ENCODE measurements at regions of chr2 and their contacts with region 1.

Region 1: DNA sequence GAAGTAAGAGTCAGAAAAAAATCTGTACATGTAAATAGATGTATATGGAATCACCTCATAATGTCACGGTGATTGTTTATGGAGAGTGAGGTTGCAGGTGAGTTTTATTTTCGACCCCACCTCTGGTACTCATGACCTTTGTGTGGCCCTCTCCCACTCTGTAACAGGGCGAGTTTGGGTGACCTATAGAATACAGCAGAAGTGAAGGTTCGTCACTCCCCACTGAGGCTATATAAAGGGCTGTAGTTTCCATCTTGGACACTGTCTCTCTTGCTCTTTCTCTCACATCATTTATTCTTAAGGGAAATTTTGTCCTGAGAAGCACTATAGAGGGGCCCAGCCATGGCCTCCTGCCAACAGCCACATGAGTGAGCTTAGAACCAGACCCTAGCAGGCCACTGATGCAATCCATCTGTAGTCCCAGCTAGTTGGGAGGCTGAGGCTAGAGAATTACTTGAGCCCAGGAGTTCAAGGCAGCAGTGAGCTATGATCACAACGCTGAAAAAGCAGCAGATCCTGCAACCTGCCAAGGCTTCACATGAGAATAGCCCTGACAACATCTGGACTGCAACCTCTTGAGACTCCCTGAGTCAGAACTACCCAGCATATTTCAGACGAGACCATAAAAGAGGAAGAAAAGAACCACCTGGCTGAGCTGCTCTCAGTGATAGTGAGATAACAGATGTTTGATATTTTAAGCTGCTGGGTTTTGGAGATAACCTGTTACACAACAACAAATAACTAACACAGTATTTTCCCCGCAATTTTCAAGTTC is 74.3 kb upstream of the SLC1A4 start:
- DNase-seq: no peak
- ATAC-seq: no peak
- H3K4me3 Mint-ChIP-seq: no peak overlapping the region
- H3K27ac Mint-ChIP-seq: no peak overlapping the region
- H3K4me1 Mint-ChIP-seq: peaks cover 39% of the 10 kb centered on the region
- H3K27me3 Mint-ChIP-seq: peaks cover 15% of the 10 kb centered on the region
- CTCF ChIP-seq: no peak

Region 2: GRCh38 chr2:64819774-64820696 is 94.9 kb before region 1 on chr2:
- CTCF ChIA-PET with region 1: no interaction called
- POLR2A ChIA-PET with region 1: no interaction called
- DNase-seq: no peak
- ATAC-seq: no peak
- H3K4me3 Mint-ChIP-seq: no peak overlapping the region
- H3K27ac Mint-ChIP-seq: no peak overlapping the region
- H3K4me1 Mint-ChIP-seq: peaks cover 26% of the 10 kb centered on the region
- H3K27me3 Mint-ChIP-seq: peaks cover 4% of the 10 kb centered on the region
- CTCF ChIP-seq: no peak

Region 3: GRCh38 chr2:64859312-64860212 is 55.4 kb before region 1 on chr2:
- CTCF ChIA-PET with region 1: interaction called, 11 read pairs
- POLR2A ChIA-PET with region 1: no interaction called
- DNase-seq: peak; percentile 72
- ATAC-seq: peak; percentile 71
- H3K4me3 Mint-ChIP-seq: peak overlapping the region; percentile 72
- H3K27ac Mint-ChIP-seq: no peak overlapping the region
- H3K4me1 Mint-ChIP-seq: peaks cover 20% of the 10 kb centered on the region
- H3K27me3 Mint-ChIP-seq: peaks cover 27% of the 10 kb centered on the region
- CTCF ChIP-seq: no peak

Region 4: GRCh38 chr2:64937687-64938491 is 23.0 kb after region 1 on chr2:
- CTCF ChIA-PET with region 1: interaction called, 25 read pairs
- POLR2A ChIA-PET with region 1: no interaction called
- DNase-seq: no peak
- ATAC-seq: no peak; the same call in 1 of the 2 replicates
- H3K4me3 Mint-ChIP-seq: no peak overlapping the region
- H3K27ac Mint-ChIP-seq: no peak overlapping the region
- H3K4me1 Mint-ChIP-seq: peaks cover 21% of the 10 kb centered on the region
- H3K27me3 Mint-ChIP-seq: no peaks in the 10 kb centered on the region; the same call in 1 of the 2 replicates
- CTCF ChIP-seq: no peak

Region 5: GRCh38 chr2:65040400-65041261 is 125.7 kb after region 1 on chr2:
- CTCF ChIA-PET with region 1: interaction called, 19 read pairs
- POLR2A ChIA-PET with region 1: no interaction called
- DNase-seq: peak; percentile 84
- ATAC-seq: peak; percentile 88
- H3K4me3 Mint-ChIP-seq: no peak overlapping the region
- H3K27ac Mint-ChIP-seq: no peak overlapping the region
- H3K4me1 Mint-ChIP-seq: peaks cover 31% of the 10 kb centered on the region
- H3K27me3 Mint-ChIP-seq: no peaks in the 10 kb centered on the region
- CTCF ChIP-seq: peak; percentile 89

Region 6: GRCh38 chr2:65056215-65057053 is 141.5 kb after region 1 on chr2 and contains the start of gene CEP68:
- CTCF ChIA-PET with region 1: interaction called, 28 read pairs
- POLR2A ChIA-PET with region 1: interaction called, 4 read pairs
- DNase-seq: peak; percentile 97
- ATAC-seq: peak; percentile 96
- H3K4me3 Mint-ChIP-seq: peak within 1 kb of the TSS; percentile 94
- H3K27ac Mint-ChIP-seq: peak within 1 kb of the TSS; percentile 83
- H3K4me1 Mint-ChIP-seq: peaks cover 33% of the 10 kb centered on the region
- H3K27me3 Mint-ChIP-seq: no peaks in the 10 kb centered on the region; the same call in 1 of the 2 replicates
- CTCF ChIP-seq: no peak
- total RNA-seq, gene CEP68: 14.6 to 16.7 TPM (median 15.3 TPM) in 3 replicates

Region 7: DNA sequence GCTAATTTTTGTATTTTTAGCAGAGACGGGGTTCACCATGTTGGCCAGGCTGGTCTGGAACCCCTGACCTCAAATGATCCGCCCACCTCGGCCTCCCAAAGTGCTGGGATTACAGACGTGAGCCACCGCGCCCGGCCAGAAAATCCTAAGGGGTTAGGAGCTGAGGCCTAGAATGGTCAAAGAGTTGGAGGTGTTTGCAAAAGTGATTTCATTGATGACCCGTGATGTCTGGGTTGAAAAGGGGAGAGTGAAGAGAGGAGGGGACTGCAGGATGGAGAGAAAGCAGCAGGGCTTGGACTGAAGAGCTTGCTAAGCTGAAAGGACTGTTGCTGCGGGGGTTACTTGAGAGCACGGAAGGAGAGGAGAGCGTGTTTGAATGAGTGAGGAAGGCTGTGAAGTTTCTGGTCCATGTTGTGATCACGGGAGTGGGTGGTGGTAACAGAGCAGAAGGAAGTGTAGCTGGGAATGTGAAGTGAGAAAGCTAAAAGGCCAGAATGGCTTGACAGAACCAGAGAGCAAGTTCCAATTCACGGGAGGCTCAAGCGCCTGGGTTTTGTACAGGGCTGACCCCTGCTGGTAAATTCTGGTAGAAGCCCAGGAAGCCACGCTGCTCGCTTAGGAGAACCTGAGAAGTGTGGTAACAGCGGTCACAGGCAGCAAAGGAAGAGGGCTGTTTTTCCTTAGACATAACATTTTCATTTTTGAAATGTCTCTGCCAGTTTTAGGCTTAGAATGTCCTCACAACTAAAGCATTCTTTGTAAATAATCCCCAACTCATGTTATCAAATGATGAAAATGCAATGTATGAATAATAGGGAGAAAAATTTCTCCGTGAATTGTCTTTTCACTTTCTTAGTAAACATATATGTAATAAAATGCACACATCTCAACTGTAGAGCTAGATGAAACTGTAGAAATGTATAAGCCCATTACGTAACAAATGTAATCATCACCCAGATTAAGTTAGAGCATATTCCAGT is 272.2 kb after region 1 on chr2:
- CTCF ChIA-PET with region 1: interaction called, 14 read pairs
- POLR2A ChIA-PET with region 1: interaction called, 3 read pairs
- DNase-seq: peak; percentile 82
- ATAC-seq: peak; percentile 98
- H3K4me3 Mint-ChIP-seq: no peak overlapping the region
- H3K27ac Mint-ChIP-seq: no peak overlapping the region; the same call in 1 of the 2 replicates
- H3K4me1 Mint-ChIP-seq: peaks cover 6% of the 10 kb centered on the region
- H3K27me3 Mint-ChIP-seq: peaks cover 16% of the 10 kb centered on the region
- CTCF ChIP-seq: peak; percentile 45; the same call in 1 of the 2 replicates

Measured in WTC11 (cell line).